ENCODE measurements at regions of chr2 and their contacts with region 1.

Region 1: GRCh38 chr2:118569876-118570535 is 277.4 kb downstream of the EN1 start:
- DNase-seq: no peak
- H3K4me3 ChIP-seq: no peak overlapping the region
- H3K27ac ChIP-seq: no peak overlapping the region
- H3K4me1 ChIP-seq: no peaks in the 10 kb centered on the region
- H3K27me3 ChIP-seq: no peaks in the 10 kb centered on the region
- CTCF ChIP-seq: no peak

Region 2: GRCh38 chr2:118502106-118502505 is 67.9 kb before region 1 on chr2:
- CTCF ChIA-PET with region 1: no interaction called
- dilution Hi-C with region 1: loop called (anchors 5 kb)
- in situ Hi-C with region 1: no loop called
- intact Hi-C with region 1: no loop called
- DNase-seq: no peak
- H3K4me3 ChIP-seq: no peak overlapping the region
- H3K27ac ChIP-seq: no peak overlapping the region
- H3K4me1 ChIP-seq: no peaks in the 10 kb centered on the region
- H3K27me3 ChIP-seq: no peaks in the 10 kb centered on the region
- CTCF ChIP-seq: no peak

Region 3: GRCh38 chr2:118520246-118520645 is 49.8 kb before region 1 on chr2:
- CTCF ChIA-PET with region 1: no interaction called
- dilution Hi-C with region 1: no loop called
- in situ Hi-C with region 1: no loop called
- intact Hi-C with region 1: no loop called
- DNase-seq: no peak
- H3K4me3 ChIP-seq: no peak overlapping the region
- H3K27ac ChIP-seq: no peak overlapping the region
- H3K4me1 ChIP-seq: no peaks in the 10 kb centered on the region
- H3K27me3 ChIP-seq: no peaks in the 10 kb centered on the region
- CTCF ChIP-seq: no peak

Region 4: GRCh38 chr2:118643294-118643693 is 73.3 kb after region 1 on chr2:
- CTCF ChIA-PET with region 1: no interaction called
- dilution Hi-C with region 1: no loop called
- in situ Hi-C with region 1: no loop called
- intact Hi-C with region 1: no loop called
- DNase-seq: no peak
- H3K4me3 ChIP-seq: no peak overlapping the region
- H3K27ac ChIP-seq: no peak overlapping the region
- H3K4me1 ChIP-seq: no peaks in the 10 kb centered on the region
- H3K27me3 ChIP-seq: no peaks in the 10 kb centered on the region
- CTCF ChIP-seq: no peak

Region 5: DNA sequence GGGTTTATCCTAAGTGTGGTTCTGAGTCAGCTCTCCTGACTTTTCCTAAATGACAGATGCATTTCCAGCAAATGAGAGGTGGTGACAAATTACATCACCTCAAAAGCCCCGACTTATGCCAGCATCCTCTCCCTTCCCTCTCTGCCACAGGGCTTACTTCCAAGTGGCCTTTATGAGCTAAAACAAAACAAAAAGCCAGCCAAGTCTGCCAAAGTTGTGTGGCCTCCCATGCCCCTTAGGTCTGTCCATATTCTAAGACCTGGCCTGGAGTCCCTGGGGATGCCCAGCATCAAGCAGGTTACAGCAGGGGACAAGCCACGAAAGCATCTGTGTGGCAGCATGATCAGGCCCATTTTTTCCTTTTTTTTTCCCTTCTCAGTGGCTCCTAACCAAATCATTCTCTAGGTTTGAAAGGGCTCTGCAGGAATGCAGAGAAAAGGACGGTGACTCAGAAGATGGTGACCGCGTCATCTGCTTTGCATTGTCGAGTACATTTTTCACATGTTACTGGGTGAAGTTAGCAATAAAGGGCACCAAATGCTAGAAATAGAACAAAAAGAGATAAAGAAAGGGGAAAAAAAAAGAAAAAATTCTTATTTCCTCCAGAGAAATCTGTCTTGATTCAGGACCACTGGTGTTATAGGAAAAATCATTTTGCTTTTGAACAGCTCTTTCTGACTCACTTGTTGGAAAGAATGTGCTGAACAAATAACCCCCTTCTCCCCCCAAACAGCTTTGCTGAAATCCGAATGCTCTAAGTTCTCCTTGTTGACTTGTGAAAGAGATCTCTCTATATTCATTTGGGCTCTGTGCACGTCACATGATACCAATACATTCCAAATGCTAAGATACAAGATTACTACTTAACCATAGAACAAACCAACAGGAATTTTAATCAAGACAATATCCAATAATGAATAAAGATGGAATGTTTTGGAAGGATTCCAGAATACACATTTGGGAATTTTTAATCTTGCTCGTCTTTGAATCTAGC is 98.7 kb after region 1 on chr2:
- CTCF ChIA-PET with region 1: no interaction called
- dilution Hi-C with region 1: loop called (anchors 5 kb)
- in situ Hi-C with region 1: no loop called
- intact Hi-C with region 1: no loop called
- DNase-seq: peak; percentile 81
- H3K4me3 ChIP-seq: no peak overlapping the region
- H3K27ac ChIP-seq: peak overlapping the region; percentile 70
- H3K4me1 ChIP-seq: peaks cover 22% of the 10 kb centered on the region
- H3K27me3 ChIP-seq: no peaks in the 10 kb centered on the region
- CTCF ChIP-seq: no peak